Activated CD4-positive, alpha-beta T cell treated with anti-CD3 and anti-CD28 coated beads, Interleukin-2, amount 10 ng/mL, durations not matched to agents 7 days and 5 days (primary cell): ENCODE measurements at regions of chr2 and their contacts with region 1.

Region 1: DNA sequence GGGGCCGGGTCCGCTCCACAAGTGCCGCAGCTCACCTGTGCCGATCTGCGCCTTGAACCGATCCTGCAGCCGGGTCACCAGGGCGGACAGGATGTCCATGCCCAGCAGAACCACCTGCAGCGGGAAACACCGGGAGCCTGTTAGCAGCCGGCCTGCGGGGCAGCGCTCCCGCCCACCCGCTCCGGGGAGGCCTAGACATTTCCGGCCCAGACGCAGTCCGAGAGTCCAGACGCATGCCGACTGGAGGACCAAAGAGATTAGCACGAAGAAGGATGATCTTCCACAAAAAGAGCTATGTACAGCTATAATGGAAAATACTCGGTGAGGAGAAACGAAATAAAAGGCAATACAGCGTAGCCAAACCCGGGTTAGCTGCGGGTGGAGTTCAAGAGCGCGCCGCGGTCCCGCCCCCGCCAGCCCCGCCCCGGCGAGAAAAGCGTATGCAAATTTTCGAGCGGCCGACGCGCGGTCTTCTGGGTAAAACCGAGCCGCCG is 421 bp upstream of the RNU4ATAC start:
- DNase-seq: peak; percentile 86
- H3K4me3 Mint-ChIP-seq: peak overlapping the region; percentile 86
- H3K27ac Mint-ChIP-seq: peak overlapping the region; percentile 98
- H3K4me1 Mint-ChIP-seq: peaks cover 57% of the 10 kb centered on the region
- H3K27me3 Mint-ChIP-seq: no peaks in the 10 kb centered on the region

Region 2: GRCh38 chr2:119630121-119630520 is 1900.1 kb before region 1 on chr2:
- CTCF ChIA-PET with region 1: no interaction called
- POLR2A ChIA-PET with region 1: interaction called, 13 read pairs
- DNase-seq: no peak
- H3K4me3 Mint-ChIP-seq: no peak overlapping the region
- H3K27ac Mint-ChIP-seq: no peak overlapping the region
- H3K4me1 Mint-ChIP-seq: no peaks in the 10 kb centered on the region
- H3K27me3 Mint-ChIP-seq: peaks cover 14% of the 10 kb centered on the region

Region 3: DNA sequence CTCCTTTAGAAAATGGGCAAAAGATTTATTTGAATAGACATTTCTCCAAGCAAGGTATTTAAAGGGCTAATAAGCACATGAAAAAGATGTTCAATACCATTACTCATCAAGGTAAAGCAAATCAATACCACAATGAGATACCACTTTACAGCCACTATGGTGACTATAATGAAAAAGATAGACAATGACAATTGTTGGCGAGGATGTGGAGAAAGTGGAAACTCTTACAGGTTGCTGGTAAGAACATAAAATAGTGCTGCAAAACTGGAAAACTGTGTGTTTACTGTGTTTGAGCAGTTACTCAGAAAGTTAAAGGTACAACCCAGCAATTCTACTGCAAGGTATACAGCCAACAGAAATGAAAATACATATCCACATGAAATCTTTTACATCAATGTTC is 31.5 kb before region 1 on chr2:
- CTCF ChIA-PET with region 1: no interaction called
- POLR2A ChIA-PET with region 1: no interaction called
- DNase-seq: no peak
- H3K4me3 Mint-ChIP-seq: no peak overlapping the region
- H3K27ac Mint-ChIP-seq: no peak overlapping the region
- H3K4me1 Mint-ChIP-seq: peaks cover 6% of the 10 kb centered on the region
- H3K27me3 Mint-ChIP-seq: no peaks in the 10 kb centered on the region

Region 4: GRCh38 chr2:121545257-121545656 is 15.0 kb after region 1 on chr2:
- CTCF ChIA-PET with region 1: interaction called, 7 read pairs
- POLR2A ChIA-PET with region 1: interaction called, 11 read pairs
- DNase-seq: no peak
- H3K4me3 Mint-ChIP-seq: no peak overlapping the region
- H3K27ac Mint-ChIP-seq: no peak overlapping the region
- H3K4me1 Mint-ChIP-seq: peaks cover 15% of the 10 kb centered on the region
- H3K27me3 Mint-ChIP-seq: no peaks in the 10 kb centered on the region

Region 5: DNA sequence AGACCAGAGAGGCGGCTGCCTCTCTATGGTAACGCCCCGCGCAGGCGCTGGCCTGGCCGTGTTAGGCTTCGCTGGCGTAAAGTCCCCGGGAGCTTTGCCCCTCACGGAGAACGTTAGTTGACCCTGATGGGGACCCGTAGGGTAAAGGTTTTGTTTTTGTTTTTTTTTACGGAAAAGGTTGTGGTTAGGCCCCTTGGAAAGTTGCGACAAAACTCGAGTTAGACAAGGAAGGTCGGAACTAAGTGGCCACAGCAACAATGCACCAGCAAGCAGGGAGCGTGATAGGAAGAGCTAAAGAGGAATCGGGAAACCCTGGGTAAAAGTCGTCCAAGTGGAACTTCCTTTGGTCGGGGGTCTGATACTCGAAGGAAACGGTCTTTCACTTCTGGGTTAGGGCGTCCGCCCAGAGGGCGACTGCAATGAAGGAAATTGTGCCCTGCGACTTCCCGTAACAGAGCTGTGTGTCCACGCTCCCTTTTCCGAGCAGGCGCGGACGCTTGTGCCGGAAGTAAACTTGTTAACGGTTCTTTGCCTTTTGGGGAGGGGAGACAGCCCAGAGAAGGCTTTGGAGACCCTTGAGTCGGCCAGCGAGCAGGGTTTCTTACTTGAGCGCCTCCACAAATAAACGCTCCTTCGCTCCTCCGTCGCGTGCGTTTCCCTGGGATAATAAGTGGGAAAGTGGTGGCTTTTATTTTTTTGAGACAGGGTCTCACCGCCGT is 119.5 kb after region 1 on chr2:
- CTCF ChIA-PET with region 1: interaction called, 4 read pairs
- POLR2A ChIA-PET with region 1: interaction called, 12 read pairs
- DNase-seq: peak; percentile 98
- H3K4me3 Mint-ChIP-seq: peak overlapping the region; percentile 95
- H3K27ac Mint-ChIP-seq: peak overlapping the region; percentile 100
- H3K4me1 Mint-ChIP-seq: peaks cover 65% of the 10 kb centered on the region
- H3K27me3 Mint-ChIP-seq: no peaks in the 10 kb centered on the region